ENCODE measurements at regions of chr5 and their contacts with region 1.

Region 1: GRCh38 chr5:24668050-24668449 is 23.3 kb upstream of the CDH10 start:
- DNase-seq: no peak
- ATAC-seq: no peak
- H3K4me3 ChIP-seq: no peak overlapping the region
- H3K27ac ChIP-seq: no peak overlapping the region
- H3K4me1 ChIP-seq: no peaks in the 10 kb centered on the region
- H3K27me3 ChIP-seq: no peaks in the 10 kb centered on the region
- CTCF ChIP-seq: no peak

Region 2: DNA sequence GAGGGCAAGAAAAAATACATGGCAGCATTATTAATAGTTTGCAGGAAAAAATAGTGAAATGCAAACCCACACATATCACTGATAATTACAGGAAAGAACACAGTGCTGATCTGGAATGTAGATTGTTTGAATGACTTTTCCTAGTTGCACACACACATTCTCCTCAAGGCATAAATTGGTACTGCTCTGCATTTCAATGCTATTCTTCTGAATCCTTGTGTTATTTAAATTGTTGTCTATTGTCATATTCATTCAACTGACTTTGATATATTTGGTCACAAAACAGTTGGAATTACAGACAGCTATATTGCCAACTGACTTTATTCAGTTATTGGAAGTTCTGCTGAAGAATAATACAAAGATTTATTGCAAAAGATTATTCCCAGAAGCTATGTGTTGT is 162.8 kb before region 1 on chr5:
- intact Hi-C with region 1: no loop called
- DNase-seq: no peak
- ATAC-seq: no peak
- H3K4me3 ChIP-seq: no peak overlapping the region
- H3K27ac ChIP-seq: no peak overlapping the region
- H3K4me1 ChIP-seq: no peaks in the 10 kb centered on the region
- H3K27me3 ChIP-seq: no peaks in the 10 kb centered on the region
- CTCF ChIP-seq: no peak

Region 3: DNA sequence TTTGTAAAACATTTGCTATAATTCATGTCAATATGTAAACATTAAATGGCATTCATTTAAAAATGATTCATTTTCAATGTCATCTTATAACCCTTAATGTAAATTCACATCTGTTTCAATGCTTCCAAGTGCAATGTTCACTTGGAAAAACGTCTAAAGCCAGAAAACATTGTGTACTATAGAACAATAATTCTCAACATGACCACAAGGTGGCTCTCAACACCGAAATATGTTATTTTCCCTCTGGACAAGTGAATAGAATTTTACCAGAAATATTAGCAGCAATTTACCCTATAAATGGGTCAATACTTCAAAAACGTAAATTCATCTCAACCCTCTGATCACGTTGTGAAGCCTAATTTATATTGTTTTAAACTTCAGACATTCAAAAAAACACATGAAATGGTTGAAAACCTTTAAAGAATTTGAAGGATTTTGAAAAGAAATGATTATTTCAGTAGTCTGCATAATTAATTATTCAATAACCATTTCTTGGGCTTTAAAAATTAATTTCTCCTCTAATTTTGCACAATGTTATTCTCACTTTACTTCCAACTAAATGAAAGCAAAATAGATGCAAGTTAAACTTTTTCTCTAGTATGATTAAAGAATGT is 34.2 kb before region 1 on chr5:
- intact Hi-C with region 1: no loop called
- DNase-seq: no peak
- ATAC-seq: no peak
- H3K4me3 ChIP-seq: no peak overlapping the region
- H3K27ac ChIP-seq: no peak overlapping the region
- H3K4me1 ChIP-seq: no peaks in the 10 kb centered on the region
- H3K27me3 ChIP-seq: peaks cover 0 to 5% (median 0%) of the 10 kb centered on the region in 7 donors
- CTCF ChIP-seq: peak; percentile 29 to 73 (median 60)

Region 4: GRCh38 chr5:24923400-24923799 is 255.3 kb after region 1 on chr5:
- intact Hi-C with region 1: no loop called
- DNase-seq: no peak
- ATAC-seq: no peak
- H3K4me3 ChIP-seq: no peak overlapping the region
- H3K27ac ChIP-seq: no peak overlapping the region
- H3K4me1 ChIP-seq: no peaks in the 10 kb centered on the region
- H3K27me3 ChIP-seq: no peaks in the 10 kb centered on the region
- CTCF ChIP-seq: no peak

Region 5: DNA sequence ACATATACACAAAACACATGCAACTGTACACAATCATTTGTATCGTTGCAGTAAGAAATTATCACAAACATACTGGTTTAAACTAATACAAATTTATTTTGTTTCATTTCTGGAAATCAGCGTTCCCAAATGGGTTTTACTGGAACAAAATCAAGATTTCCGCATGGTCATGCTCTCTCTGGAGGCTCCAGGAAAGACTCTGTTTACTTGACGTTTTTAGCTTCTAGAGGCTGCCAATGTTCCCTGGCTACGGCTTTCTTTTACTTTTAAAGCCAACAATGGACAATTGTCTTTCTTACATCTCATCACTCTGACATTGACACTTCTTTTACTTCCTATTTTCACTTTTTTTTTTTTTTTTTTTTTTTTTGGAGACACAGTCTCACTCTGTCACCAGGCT is 1577.3 kb after region 1 on chr5:
- intact Hi-C with region 1: loop called in 1 of 10 experiments (anchors 5 kb)
- DNase-seq: no peak
- ATAC-seq: peak in 1 of 8 donors; percentile 20
- H3K4me3 ChIP-seq: no peak overlapping the region
- H3K27ac ChIP-seq: no peak overlapping the region
- H3K4me1 ChIP-seq: no peaks in the 10 kb centered on the region
- H3K27me3 ChIP-seq: no peaks in the 10 kb centered on the region
- CTCF ChIP-seq: no peak